Activated T-helper 2 cell treated with anti-CD3 and anti-CD28 coated beads, Interferon-gamma antibody, Interleukin-2, Interleukin-4, amounts not matched to agents 10 μg/mL and 5 μg/mL and 100 μg/mL, durations not matched to agents 14 hours and 24 hours and 36 hours (primary cell): ENCODE measurements at regions of chr17 and their contacts with region 1.

Region 1: GRCh38 chr17:31321481-31321880 is at the start of gene EVI2A:
- DNase-seq: peak; percentile 79
- H3K4me3 Mint-ChIP-seq: peak within 1 kb of the TSS; percentile 83
- H3K27ac Mint-ChIP-seq: peak within 1 kb of the TSS; percentile 96
- H3K4me1 Mint-ChIP-seq: peaks cover 34% of the 10 kb centered on the region
- H3K27me3 Mint-ChIP-seq: no peaks in the 10 kb centered on the region
- total RNA-seq, gene EVI2A: 18.6 and 20.7 TPM in 2 replicates

Region 2: GRCh38 chr17:31094600-31095238 is 226.8 kb before region 1 on chr17 and contains the start of gene NF1:
- intact Hi-C with region 1: loop called (anchors 10 kb)
- DNase-seq: peak; percentile 83
- H3K4me3 Mint-ChIP-seq: peak within 1 kb of the TSS; percentile 94
- H3K27ac Mint-ChIP-seq: peak within 1 kb of the TSS; percentile 87
- H3K4me1 Mint-ChIP-seq: peaks cover 13% of the 10 kb centered on the region
- H3K27me3 Mint-ChIP-seq: no peaks in the 10 kb centered on the region
- total RNA-seq, gene NF1: 32.4 and 36.8 TPM in 2 replicates

Region 3: DNA sequence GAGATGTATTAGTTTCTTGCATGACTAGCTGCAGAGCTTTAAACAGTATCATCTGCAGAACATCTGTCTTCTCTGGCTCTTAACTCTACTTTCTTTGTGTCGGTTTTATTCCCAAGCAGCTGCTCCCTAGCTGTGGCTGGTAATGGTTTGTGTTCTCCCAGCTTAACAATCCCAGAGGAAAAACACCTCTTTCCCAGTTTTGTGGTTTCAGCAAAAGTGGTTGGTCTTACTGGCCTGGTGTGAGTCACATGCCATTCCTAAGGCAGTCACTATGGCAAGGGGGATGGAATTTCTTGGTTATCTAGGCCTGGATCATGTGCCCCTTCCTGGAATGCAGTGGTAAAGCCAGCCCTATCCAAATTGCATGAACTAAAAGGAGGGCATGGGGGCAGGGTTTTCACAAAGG is 51.9 kb before region 1 on chr17:
- intact Hi-C with region 1: no loop called
- DNase-seq: no peak
- H3K4me3 Mint-ChIP-seq: no peak overlapping the region
- H3K27ac Mint-ChIP-seq: no peak overlapping the region
- H3K4me1 Mint-ChIP-seq: peaks cover 2% of the 10 kb centered on the region
- H3K27me3 Mint-ChIP-seq: no peaks in the 10 kb centered on the region

Region 4: DNA sequence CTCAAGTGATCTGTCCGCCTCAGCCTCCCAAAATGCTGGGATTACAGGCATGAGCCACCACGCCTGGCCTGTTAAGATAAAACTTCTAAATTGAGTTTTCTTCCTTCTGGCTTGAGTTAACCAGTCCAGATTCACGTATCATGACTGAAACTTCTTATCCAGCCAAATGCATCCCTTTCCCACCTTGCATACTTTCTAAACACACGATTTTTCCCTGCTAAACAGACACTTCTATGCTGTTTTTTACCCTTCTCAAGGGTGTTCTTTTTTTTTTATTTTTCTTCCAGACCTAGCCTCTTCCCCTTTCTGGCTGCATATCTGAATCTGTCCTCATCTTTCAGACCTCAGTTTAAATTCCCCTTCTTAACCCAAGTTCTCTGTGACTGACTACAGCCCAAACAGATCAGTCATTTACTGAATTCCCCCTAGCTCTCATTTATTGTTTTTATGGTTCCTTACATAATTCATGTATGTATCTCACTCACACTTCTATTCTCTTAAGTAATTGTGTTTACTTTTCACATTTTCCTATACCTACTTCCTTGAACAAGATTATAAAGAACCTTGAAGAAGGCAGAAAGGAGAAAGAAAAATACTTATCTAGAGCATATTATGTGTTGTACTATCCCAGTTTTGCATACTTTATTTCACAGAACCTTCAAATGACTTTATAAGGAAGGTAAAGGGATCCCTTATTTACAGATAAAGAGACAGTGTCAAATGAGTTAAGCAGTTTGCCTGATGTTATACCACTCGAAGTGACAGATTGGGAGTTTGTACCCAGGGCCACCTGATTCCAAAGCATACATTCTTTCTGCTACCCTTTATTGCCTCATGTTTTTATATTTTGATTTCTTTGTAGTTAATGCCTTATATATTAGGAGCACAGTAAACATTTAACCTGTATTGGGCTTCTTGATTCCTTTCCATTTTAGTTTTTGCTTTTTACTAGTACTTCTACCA is 12.8 kb before region 1 on chr17:
- intact Hi-C with region 1: loop called (anchors 1 kb)
- DNase-seq: no peak
- H3K4me3 Mint-ChIP-seq: peak overlapping the region; percentile 86
- H3K27ac Mint-ChIP-seq: peak overlapping the region; percentile 86
- H3K4me1 Mint-ChIP-seq: peaks cover 48% of the 10 kb centered on the region
- H3K27me3 Mint-ChIP-seq: no peaks in the 10 kb centered on the region

Region 5: GRCh38 chr17:31339906-31340661 is 18.6 kb after region 1 on chr17:
- intact Hi-C with region 1: no loop called
- DNase-seq: no peak
- H3K4me3 Mint-ChIP-seq: no peak overlapping the region
- H3K27ac Mint-ChIP-seq: no peak overlapping the region
- H3K4me1 Mint-ChIP-seq: peaks cover 7% of the 10 kb centered on the region
- H3K27me3 Mint-ChIP-seq: no peaks in the 10 kb centered on the region